ENCODE measurements at regions of chr10 and their contacts with region 1.

Region 1: DNA sequence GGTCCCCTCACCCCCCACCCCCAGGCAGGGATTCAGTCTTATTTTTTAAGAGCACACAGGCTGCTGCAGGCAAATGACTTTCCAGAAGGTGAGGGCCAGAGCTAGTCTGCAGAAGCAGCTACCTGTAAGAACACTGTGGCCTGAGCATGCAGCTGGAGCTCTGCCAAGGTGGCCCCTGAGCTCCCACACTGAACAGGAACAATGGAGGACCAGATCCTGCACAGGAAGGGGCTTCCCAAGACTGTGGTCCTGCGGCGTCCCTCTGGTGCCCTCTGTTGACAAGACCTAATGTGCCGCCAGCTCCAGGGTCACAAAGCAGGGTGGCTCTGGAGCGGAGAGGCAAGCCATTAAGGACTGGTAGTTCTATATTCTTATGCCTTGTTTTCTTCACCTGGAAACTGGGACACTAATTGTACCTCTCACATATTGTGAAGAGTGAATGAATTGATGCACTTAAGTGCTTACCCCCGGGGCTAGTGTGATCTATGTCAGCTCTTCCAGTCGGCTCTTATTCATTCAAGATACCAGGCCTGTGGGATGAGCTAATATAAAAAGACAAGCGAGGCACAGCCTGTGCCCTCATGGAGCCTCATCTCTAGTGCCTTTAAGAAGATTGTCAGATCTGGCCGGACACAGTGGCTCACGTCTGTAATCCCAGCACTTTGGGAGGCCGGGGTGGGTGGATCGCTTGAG is 8.0 kb upstream of the BEND7 start:
- DNase-seq: peak; percentile 70 to 75
- ATAC-seq: peak; percentile 98 to 99
- H3K4me3 ChIP-seq: no peak overlapping the region
- H3K27ac ChIP-seq: peak overlapping the region in 1 of 2 experiments; percentile 50; a peak in 2 of 6 replicates
- H3K4me1 ChIP-seq: no peaks in the 10 kb centered on the region
- CTCF ChIP-seq: peak; percentile 75
- EP300 ChIP-seq: no peak
- POLR2A ChIP-seq: no peak
- RAD21 ChIP-seq: peak; percentile 71 to 75

Region 2: DNA sequence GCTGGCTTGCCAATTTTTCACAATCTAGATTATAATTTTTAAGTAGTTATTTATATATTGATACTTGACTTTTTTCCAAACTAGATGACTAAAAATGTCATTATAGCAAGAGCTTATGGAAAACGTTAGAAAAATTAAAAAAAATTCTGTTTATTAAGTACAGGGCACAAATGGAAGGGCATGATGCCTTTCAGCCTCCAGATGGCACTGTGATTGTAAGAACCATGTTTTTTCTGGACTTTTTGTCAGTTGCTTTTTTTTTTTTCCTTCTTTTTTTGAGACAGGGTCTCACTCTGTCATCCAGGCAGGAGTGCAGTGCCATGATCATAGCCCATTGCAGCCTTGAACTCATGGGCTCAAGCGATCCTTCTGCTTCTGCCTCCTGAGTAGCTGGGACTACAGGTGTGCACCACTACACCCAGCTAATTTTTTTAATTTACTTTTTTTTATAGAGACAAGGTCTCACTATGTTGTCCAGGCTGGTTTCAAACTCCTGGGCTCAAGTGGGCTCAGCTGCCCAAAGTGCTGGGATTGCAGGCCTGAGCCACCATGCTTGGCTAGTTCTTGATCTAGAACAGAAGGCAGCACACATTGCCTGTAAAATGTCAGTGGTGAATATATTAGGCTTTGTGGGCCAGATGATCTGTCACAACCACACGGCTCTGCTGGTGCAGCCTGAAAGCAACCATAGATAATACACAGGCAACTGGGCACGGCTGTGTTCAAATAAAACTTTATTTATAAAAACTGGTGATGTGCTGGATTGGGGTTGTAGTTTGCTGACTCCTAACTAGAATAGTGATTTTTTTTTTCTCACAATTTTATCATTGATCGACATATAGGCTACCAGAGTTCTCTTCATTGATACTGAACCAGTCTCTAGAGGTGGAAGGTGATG is 330.0 kb before region 1 on chr10:
- CTCF ChIA-PET with region 1: interaction called, 13 read pairs
- POLR2A ChIA-PET with region 1: no interaction called
- DNase-seq: peak in 1 of 2 experiments; percentile 47
- ATAC-seq: peak in 1 of 2 experiments; percentile 60; a peak in 2 of 6 replicates
- H3K4me3 ChIP-seq: no peak overlapping the region
- H3K27ac ChIP-seq: no peak overlapping the region
- H3K4me1 ChIP-seq: no peaks in the 10 kb centered on the region
- CTCF ChIP-seq: peak; percentile 61
- EP300 ChIP-seq: no peak
- POLR2A ChIP-seq: no peak
- RAD21 ChIP-seq: peak; percentile 43 to 49; a peak in 4 of 5 replicates

Region 3: GRCh38 chr10:13291061-13291460 is 245.8 kb before region 1 on chr10:
- CTCF ChIA-PET with region 1: no interaction called
- POLR2A ChIA-PET with region 1: no interaction called
- DNase-seq: no peak
- ATAC-seq: no peak
- H3K4me3 ChIP-seq: no peak overlapping the region
- H3K27ac ChIP-seq: no peak overlapping the region
- H3K4me1 ChIP-seq: no peaks in the 10 kb centered on the region
- CTCF ChIP-seq: no peak
- EP300 ChIP-seq: no peak
- POLR2A ChIP-seq: no peak
- RAD21 ChIP-seq: no peak

Region 4: GRCh38 chr10:13365243-13365642 is 171.6 kb before region 1 on chr10:
- CTCF ChIA-PET with region 1: interaction called, 61 read pairs
- POLR2A ChIA-PET with region 1: no interaction called
- DNase-seq: no peak
- ATAC-seq: no peak
- H3K4me3 ChIP-seq: no peak overlapping the region
- H3K27ac ChIP-seq: no peak overlapping the region
- H3K4me1 ChIP-seq: no peaks in the 10 kb centered on the region
- CTCF ChIP-seq: no peak
- EP300 ChIP-seq: no peak
- POLR2A ChIP-seq: no peak
- RAD21 ChIP-seq: no peak

Region 5: DNA sequence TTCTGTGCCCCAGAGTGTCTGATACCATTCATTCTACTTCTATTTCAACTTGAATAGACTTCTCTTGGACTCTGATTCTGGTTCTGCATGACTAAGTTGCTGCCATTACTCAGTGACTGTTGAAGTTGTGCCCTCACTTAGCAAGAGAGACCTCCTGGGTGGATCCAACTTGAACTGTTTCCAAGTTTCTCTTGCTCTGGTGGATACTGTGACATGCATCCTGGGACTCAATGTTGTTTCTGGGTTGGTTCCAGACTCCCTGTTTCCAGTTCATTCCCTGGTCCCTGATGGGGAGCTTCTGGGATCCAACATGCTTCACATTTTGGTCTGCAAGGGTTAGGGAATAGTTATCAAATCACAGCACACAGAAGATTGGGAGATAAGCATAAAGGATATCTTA is 23.8 kb after region 1 on chr10:
- CTCF ChIA-PET with region 1: interaction called, 13 read pairs
- POLR2A ChIA-PET with region 1: no interaction called
- DNase-seq: peak in 1 of 2 experiments; percentile 10
- ATAC-seq: no peak
- H3K4me3 ChIP-seq: no peak overlapping the region
- H3K27ac ChIP-seq: no peak overlapping the region
- H3K4me1 ChIP-seq: 0 out of 3 replicates have a peak, but pooled peaks cover 5% of the 10 kb centered on the region
- CTCF ChIP-seq: no peak
- EP300 ChIP-seq: no peak
- POLR2A ChIP-seq: no peak
- RAD21 ChIP-seq: no peak